ENCODE measurements at regions of chrX and their contacts with region 1.

Region 1: GRCh38 chrX:9341291-9342201 is 123.3 kb upstream of the TBL1X start:
- DNase-seq: peak in 4 of 10 donors; percentile 9 to 50 (median 41)

Region 2: DNA sequence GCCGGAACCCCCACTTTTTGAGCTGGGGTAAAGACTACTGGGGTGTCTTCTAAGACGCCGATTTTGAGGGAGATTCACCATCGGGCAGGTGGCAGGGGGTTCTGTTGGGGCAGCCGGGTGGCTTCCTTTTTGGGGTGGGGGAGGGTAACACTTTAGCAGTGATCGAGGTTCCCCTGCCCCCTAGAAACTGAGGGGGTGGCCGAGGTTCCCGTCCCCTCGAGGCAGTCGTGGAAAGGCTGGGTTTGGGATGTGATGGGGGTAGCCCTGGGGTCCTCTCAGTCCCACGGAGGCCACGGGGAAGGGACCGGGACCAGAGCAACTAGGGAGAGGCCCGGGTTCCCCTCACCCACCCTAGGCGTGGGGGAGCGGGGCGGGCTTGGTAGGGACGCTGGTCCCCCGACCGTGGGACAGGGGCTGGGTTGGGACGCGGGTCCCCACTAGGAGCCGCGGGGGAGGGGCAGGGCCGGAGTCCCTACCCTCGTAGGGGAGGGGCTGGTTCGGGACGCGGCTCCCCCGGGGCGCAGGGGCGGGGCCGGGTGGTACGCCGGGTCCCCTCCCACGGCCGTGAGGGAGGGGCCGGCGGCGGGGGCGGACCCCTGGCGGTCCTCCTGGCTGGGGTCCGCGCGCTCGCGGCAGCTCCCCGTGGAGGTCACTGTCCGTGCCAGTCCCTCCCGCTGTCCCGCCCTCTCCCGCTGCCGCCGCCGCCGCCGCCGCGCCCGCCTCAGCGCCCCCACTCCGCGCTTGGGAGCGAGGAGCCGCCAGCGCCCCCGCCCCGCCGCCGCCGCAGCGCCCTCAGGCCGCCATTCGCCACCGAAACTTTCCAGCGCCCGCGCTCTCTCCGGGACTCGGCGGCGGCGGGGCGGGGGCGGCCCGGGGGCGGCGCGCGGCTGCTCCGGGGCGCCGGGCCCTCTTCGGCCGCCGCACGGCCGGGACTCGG is 123.2 kb after region 1 on chrX and contains the start of gene TBL1X:
- intact Hi-C with region 1: loop called (anchors 1 kb)
- DNase-seq: peak in 8 of 10 donors; percentile 18 to 84 (median 48)

Region 3: GRCh38 chrX:9948406-9948805 is 606.9 kb after region 1 on chrX:
- intact Hi-C with region 1: no loop called
- DNase-seq: peak in 2 of 10 donors; percentile 6 to 11